Activated B cell treated with CpG ODN at 0.5 μM for 24 hours (primary cell): ENCODE measurements at regions of chr15 and their contacts with region 1.

Region 1: DNA sequence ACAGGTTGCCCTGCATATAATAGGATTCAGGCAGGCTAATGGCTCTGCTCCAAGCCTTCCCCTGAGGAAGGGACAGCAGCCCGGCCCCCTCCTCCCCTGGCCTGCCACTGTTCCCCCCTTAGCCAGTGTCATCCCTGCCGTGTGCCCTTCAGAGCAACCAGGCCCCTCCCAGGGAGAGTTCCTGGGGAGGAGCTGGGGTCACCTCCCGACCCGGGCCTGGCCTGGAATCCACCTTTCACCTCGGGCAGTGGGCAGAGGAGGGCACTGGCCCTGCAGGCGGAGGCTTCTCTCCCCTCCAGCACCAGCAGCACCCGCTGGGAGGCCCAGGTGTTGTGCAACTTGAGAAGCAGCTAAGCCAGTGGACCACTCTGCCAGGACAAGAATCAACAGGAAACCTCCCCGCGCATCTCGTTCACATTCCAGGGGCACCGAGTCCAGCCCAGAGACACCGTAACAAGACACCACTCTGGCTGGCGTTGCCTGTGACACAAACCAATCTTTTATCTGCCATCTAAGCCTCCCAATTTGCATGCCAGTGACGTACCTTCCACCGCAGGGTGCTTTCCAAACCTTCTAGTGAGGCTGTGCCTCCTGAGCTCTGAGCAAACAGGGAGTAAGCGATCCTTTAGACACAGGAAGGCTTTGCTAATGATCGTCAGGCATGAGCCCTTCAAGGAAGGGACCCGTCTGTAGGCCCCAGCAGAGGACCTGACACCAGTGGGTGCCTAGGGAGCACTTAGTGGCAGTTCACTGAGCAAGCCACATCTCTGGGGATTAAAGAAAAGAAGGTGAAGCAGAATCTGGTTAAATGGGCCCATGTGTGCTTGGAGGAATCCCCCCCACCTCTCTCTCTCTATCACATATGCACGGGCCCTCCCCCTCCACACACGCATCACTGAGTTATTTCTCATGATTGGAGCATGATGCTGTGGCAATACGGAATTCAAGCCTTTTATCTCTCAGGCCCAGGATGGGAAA is 98.9 kb upstream of the TLE3 start:
- DNase-seq: peak; percentile 62
- ATAC-seq: peak; percentile 82
- H3K4me3 Mint-ChIP-seq: peak overlapping the region; percentile 55
- H3K27ac Mint-ChIP-seq: peak overlapping the region; percentile 79
- H3K4me1 Mint-ChIP-seq: peaks cover 58% of the 10 kb centered on the region
- H3K27me3 Mint-ChIP-seq: peaks cover 7% of the 10 kb centered on the region
- CTCF ChIP-seq: no peak

Region 2: DNA sequence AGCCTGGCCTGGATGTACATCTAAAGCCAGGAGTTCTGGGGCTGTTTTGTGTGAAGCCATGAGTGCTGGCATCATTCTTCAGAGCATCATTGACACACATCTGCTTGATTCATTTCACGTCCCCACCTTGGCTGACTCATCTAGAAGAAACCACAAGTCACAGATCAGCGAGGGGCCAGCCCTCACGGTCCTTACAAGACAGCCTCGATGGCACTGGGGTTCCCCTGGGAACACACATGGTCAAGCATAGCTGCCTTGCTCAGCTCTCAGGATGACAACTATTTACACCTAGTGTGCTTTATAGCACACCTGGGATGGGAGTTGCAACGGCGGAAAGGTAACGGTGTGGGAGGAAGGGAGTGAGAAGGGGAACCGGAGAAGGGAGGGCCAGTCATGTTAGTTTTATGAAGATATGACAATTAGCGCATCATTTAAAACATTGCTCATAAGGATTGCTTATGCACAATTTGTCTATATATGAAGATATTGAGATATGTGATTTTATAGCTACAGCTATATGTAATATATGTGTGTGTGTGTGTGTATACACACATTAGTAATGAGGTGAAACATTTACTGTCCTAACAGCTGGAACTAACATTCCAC is 516.9 kb before region 1 on chr15:
- CTCF ChIA-PET with region 1: no interaction called
- POLR2A ChIA-PET with region 1: no interaction called
- intact Hi-C with region 1: loop called (anchors 1 kb)
- DNase-seq: peak; percentile 44
- ATAC-seq: peak; percentile 93
- H3K4me3 Mint-ChIP-seq: no peak overlapping the region
- H3K27ac Mint-ChIP-seq: peak overlapping the region; percentile 68
- H3K4me1 Mint-ChIP-seq: peaks cover 25% of the 10 kb centered on the region
- H3K27me3 Mint-ChIP-seq: peaks cover 23% of the 10 kb centered on the region
- CTCF ChIP-seq: no peak

Region 3: DNA sequence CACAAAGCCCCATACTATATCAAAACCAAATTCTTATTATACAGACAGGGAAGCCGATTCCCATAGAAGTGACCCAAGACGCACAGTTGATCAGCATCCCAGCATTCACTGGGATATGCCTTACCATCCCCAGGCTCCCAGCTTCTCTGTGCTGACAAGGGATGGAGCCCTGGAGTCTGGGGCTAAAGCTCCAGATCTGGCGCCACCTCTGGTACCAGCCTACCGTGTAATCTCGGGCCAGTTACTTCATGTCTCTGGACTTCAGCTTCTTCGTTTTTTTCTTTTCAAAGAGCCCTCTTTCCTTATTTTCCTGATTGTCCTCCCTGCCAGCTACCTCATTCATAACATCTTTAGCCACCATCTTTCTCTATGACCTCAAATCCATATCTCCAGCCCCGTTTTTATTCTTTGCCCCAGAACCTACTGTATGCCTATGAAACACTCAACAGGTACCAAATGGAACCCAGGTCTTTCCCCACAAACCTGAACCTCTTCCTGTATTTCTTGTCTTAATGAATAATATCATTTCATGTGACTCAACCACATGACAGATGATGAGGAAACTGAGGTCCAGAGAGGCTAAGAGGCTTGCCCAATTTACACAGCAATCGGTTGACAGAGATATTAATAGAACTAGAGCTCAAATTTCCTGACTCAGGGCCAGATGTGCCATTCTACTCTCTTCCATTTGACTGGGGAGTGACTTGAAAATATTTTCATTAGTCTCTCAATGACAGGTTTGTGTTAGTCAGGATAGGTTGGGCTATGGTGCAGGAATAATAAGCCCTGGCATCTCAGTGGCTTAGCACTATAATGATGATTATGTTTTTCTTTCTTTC is 13.5 kb before region 1 on chr15:
- CTCF ChIA-PET with region 1: no interaction called
- POLR2A ChIA-PET with region 1: interaction called, 29 read pairs
- intact Hi-C with region 1: no loop called
- DNase-seq: no peak
- ATAC-seq: no peak
- H3K4me3 Mint-ChIP-seq: no peak overlapping the region
- H3K27ac Mint-ChIP-seq: no peak overlapping the region
- H3K4me1 Mint-ChIP-seq: no peaks in the 10 kb centered on the region
- H3K27me3 Mint-ChIP-seq: peaks cover 5% of the 10 kb centered on the region
- CTCF ChIP-seq: no peak

Region 4: DNA sequence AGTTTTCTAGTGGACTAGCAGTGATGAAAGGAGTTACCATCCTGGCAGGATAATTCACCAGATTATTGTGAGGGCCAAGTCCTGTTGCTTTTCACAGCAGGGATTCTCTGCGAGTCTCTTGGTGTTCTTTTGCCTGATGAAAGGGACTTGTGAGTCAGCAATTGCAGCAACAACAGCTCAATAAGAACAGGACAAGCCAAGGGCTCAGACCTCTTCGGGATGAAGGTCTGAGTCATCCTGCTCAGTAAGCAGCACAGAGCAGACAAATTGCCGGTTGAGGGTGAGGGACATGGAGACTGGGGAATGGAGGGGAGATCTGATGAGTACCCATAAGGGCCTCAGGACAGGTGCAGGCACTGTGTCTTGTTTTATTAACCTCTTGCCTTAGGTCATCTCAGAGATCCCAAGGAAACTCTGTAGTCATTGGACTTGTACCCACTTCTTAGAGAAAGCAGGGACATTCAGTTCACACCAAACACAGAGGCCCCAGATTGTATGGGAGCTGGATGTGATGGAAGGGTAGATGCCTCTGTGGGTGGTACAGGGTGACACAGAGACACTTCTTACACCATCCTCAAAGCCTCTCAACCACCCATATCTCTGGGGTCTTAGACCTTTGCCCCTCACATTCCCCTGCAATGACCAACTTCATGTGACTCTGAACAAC is 75.0 kb after region 1 on chr15:
- CTCF ChIA-PET with region 1: no interaction called
- POLR2A ChIA-PET with region 1: no interaction called
- intact Hi-C with region 1: loop called (anchors 2 kb)
- DNase-seq: no peak
- ATAC-seq: no peak
- H3K4me3 Mint-ChIP-seq: no peak overlapping the region
- H3K27ac Mint-ChIP-seq: no peak overlapping the region
- H3K4me1 Mint-ChIP-seq: peaks cover 57% of the 10 kb centered on the region
- H3K27me3 Mint-ChIP-seq: peaks cover 3% of the 10 kb centered on the region
- CTCF ChIP-seq: no peak